Endothelial cell of umbilical vein (primary cell): ENCODE measurements at regions of chr5 and their contacts with region 1.

Region 1: GRCh38 chr5:138641547-138642298 is 66.5 kb upstream of the HSPA9 start:
- DNase-seq: peak; percentile 64
- H3K4me3 ChIP-seq: no peak overlapping the region
- H3K27ac ChIP-seq: no peak overlapping the region
- H3K4me1 ChIP-seq: no peaks in the 10 kb centered on the region
- H3K27me3 ChIP-seq: peaks cover 0 to 6% of the 10 kb centered on the region in 2 experiments
- CTCF ChIP-seq: peak; percentile 79 to 86
- POLR2A ChIP-seq: no peak

Region 2: DNA sequence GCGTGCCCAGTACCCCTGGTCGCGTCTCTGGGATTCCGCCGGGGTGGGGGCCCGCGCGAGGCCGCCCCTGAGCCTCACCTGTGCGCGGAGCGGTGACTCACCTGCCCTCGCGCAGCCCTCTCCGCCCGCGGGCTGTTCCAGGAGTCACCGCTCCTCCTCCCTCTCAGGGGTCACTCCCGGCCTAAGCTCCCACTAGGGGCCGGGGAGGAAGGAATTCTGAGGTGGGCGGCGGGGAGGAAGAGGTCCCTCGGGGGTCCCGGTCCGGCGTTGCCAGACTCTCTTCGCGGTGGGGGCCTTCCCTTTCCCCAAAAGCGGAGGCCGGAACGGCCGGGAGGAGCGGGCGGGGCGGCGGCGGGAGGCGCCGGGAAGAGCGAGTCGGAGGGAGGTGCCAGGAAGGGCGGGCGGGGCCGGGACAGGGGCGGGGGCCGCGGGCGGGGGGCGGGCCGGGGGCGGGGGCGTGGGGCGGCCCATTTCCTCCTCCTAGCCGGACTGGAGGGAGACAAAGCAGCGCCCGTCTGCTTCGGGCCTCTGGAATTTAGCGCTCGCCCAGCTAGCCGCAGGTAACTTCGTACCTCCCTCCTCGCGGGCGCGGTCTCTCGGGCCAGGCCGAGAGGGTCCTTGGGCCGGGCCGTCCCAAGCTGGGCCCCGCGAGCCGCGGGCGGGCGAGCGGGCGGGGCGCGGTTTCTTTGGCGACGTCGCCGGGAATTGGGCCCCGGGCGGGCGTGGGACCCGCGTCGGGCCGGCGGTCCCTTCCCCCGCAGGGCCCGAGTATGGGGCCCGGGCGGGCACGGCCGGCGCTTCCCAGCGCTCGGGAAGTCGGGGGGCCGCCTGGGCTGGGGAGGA is 111.4 kb after region 1 on chr5 and contains the start of gene CTNNA1:
- CTCF ChIA-PET with region 1: no interaction called
- POLR2A ChIA-PET with region 1: no interaction called
- dilution Hi-C with region 1: no loop called
- intact Hi-C with region 1: loop called (anchors 5 kb)
- DNase-seq: peak; percentile 61
- H3K4me3 ChIP-seq: peak within 1 kb of the TSS; percentile 72 to 94 (median 86)
- H3K27ac ChIP-seq: peak within 1 kb of the TSS; percentile 97
- H3K4me1 ChIP-seq: peaks cover 14% of the 10 kb centered on the region
- H3K27me3 ChIP-seq: no peaks in the 10 kb centered on the region
- CTCF ChIP-seq: no peak
- POLR2A ChIP-seq: peak; percentile 89
- total RNA-seq, gene CTNNA1: 394 and 420 TPM in 2 replicates

Region 3: DNA sequence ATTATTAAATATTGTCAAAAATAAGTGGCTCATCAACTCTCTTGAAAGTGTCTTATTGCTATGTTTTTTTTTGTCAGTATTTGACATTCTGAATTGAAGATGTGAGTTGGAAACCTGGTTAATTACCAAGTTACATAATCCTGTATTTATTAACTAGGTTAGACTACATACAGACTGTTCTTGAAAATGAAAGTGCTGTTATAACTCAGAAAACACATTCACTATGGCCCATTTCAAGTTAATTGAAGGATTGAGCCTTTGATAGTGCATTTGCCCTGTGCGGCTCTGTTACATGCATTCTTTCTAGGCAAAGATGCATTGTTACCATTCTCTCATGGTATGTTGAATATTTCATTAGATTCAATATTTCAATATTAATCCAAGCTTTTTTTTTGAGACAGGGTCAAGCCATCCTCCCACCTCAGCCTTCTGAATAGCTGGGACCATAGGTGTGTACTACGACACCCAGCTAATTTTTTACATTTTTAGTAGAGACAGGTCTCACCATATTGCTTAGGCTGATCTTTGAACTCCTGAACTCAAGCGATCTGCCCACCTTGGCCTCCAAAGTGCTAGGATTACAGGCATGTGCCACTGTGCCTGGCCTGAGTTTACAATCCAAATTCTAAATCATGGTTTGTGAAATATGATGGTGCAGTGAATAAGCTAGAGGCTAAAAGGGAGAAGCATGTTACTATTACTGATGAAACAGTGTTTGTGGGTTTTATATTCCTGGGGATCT is 121.5 kb after region 1 on chr5:
- CTCF ChIA-PET with region 1: no interaction called
- POLR2A ChIA-PET with region 1: no interaction called
- dilution Hi-C with region 1: no loop called
- intact Hi-C with region 1: no loop called
- DNase-seq: no peak
- H3K4me3 ChIP-seq: no peak overlapping the region
- H3K27ac ChIP-seq: no peak overlapping the region
- H3K4me1 ChIP-seq: peaks cover 17% of the 10 kb centered on the region
- H3K27me3 ChIP-seq: no peaks in the 10 kb centered on the region
- CTCF ChIP-seq: no peak
- POLR2A ChIP-seq: no peak

Region 4: GRCh38 chr5:138932171-138932810 is 290.6 kb after region 1 on chr5:
- CTCF ChIA-PET with region 1: no interaction called
- POLR2A ChIA-PET with region 1: no interaction called
- dilution Hi-C with region 1: no loop called
- intact Hi-C with region 1: loop called (anchors 10 kb)
- DNase-seq: no peak
- H3K4me3 ChIP-seq: no peak overlapping the region
- H3K27ac ChIP-seq: no peak overlapping the region
- H3K4me1 ChIP-seq: peaks cover 7% of the 10 kb centered on the region
- H3K27me3 ChIP-seq: no peaks in the 10 kb centered on the region
- CTCF ChIP-seq: no peak
- POLR2A ChIP-seq: no peak

Region 5: GRCh38 chr5:139137702-139138101 is 496.0 kb after region 1 on chr5:
- CTCF ChIA-PET with region 1: interaction called, 3 read pairs
- POLR2A ChIA-PET with region 1: no interaction called
- dilution Hi-C with region 1: no loop called
- intact Hi-C with region 1: loop called (anchors 5 kb)
- DNase-seq: peak; percentile 51
- H3K4me3 ChIP-seq: no peak overlapping the region
- H3K27ac ChIP-seq: no peak overlapping the region
- H3K4me1 ChIP-seq: peaks cover 11% of the 10 kb centered on the region
- H3K27me3 ChIP-seq: no peaks in the 10 kb centered on the region
- CTCF ChIP-seq: peak; percentile 24 to 38
- POLR2A ChIP-seq: no peak

Region 6: DNA sequence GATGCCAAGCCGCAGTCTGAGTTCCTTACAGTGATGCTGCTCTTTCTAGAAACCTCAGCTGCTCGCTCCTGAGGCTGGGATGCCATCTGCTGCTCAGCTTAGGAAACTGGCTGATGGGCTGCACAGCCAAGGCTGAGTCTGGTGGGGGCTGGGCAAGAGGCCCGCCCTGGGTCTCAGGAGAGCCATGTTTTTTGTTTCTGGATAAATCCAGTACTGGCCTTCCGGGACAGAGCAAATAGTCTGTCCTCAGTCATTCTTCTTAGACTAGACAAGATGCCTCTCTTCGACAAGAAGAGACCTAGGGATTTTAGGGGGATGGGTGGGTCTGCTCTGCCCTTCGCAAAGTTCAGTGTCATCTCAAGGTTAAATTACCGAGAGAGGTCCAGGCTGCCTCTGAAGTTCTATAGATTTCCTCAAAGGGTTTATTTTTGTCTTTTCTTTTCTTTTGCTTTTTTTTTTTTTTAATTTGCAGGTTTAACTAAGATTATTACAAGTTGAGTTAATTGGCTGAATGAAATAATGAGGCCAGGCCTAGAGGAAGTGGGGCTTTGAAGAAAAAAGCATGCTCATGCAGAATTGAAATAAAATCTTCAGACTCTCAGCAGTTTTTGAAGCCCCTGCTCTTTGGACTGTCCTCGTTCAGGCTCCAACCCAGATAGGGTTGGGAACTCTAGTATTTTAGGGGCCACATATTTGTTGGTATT is 621.2 kb after region 1 on chr5:
- CTCF ChIA-PET with region 1: interaction called, 27 read pairs
- POLR2A ChIA-PET with region 1: no interaction called
- dilution Hi-C with region 1: no loop called
- intact Hi-C with region 1: loop called (anchors 1 kb)
- DNase-seq: peak; percentile 87
- H3K4me3 ChIP-seq: no peak overlapping the region
- H3K27ac ChIP-seq: no peak overlapping the region
- H3K4me1 ChIP-seq: no peaks in the 10 kb centered on the region
- H3K27me3 ChIP-seq: peaks cover 2 to 10% of the 10 kb centered on the region in 2 experiments
- CTCF ChIP-seq: peak; percentile 87 to 88
- POLR2A ChIP-seq: no peak